ENCODE measurements at regions of chr4 and their contacts with region 1.

Region 1: GRCh38 chr4:39977489-39978377 is at the start of gene PDS5A:
- DNase-seq: peak; percentile 61 to 95 (median 89)

Region 2: DNA sequence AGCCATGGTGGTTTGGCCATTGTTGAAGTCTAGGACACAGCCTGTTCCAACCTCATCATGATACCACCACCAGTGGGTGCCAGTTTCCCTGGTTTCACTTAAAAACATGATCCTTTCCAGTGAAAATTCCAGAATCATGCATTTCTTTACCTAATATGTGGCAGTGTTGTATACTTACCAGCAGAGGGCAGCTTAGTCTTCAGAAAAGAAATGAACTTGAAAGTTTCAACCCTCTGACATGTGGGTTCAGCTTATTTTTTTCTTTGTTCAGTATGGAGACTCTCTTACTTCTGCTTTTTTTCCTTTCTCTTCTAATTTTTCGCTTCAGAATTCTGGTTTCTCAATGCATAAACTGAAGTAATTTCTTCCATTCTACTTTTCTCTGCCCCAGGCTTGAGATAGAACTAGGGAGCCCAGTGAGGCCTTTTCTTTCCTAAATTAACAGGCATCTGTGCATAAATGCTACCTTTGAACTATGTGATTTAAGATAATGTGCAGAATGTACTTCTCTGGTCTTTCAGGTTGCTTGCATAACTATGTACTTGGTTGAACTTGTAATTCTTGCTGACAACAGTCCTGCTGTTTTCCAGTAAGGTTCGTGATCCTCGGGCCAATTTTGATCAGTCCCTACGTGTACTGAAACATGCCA is 508.2 kb before region 1 on chr4:
- intact Hi-C with region 1: loop called (anchors 5 kb)
- DNase-seq: peak in 18 of 42 donors; percentile 12 to 64 (median 40)

Region 3: GRCh38 chr4:39527273-39528060 is 450.3 kb before region 1 on chr4 and contains the start of gene UGDH:
- intact Hi-C with region 1: loop called (anchors 2 kb)
- DNase-seq: peak; percentile 88 to 99 (median 97)

Region 4: GRCh38 chr4:39697740-39698423 is 279.9 kb before region 1 on chr4 and contains the start of gene UBE2K:
- intact Hi-C with region 1: loop called (anchors 2 kb)
- DNase-seq: peak; percentile 42 to 94 (median 86)

Region 5: GRCh38 chr4:40056716-40057585 is 79.2 kb after region 1 on chr4 and contains the start of gene N4BP2:
- intact Hi-C with region 1: loop called (anchors 5 kb)
- DNase-seq: peak in 41 of 42 donors; percentile 38 to 90 (median 78)